Activated naive CD4-positive, alpha-beta T cell treated with anti-CD3 and anti-CD28 coated beads for 36 hours (primary cell): ENCODE measurements at regions of chr20 and their contacts with region 1.

Region 1: DNA sequence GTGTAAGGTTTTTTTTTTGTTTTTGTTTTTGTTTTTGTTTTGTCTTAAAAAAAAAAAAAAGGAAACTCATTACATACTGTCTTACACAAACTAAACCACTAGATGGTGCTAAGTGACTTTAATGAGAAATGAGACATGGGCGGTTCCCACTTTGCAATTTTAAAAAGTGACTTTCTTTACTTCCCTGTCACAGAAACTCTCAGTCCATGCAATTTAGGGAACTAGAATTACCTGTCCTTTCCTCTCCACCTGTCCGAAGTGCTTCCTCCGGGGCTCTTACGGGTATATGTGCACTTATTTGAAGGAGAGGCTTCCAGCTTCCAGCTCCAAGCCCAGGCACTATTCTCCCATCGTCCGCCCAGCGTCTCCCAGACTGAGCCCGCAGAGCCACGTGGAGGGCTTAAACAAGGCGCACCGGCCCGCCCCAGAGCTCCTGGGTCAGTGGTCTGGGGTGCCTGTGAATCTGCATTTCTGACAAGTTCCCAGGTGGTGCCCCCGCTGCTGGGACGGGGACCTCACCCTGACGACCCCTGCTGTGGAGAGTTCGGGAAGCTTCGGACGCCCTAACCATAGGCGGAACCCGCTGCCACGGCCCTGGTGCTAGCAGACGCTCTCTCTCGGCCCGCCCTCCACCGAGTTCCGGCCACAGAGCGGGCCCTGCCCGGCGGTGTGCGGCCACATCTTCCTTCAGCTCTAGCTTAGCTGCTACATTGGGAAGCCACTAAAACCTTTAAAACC is 26.1 kb downstream of the BFSP1 start:
- DNase-seq: no peak
- H3K4me3 Mint-ChIP-seq: peak overlapping the region; percentile 73
- H3K27ac Mint-ChIP-seq: peak overlapping the region; percentile 18
- H3K4me1 Mint-ChIP-seq: peaks cover 19% of the 10 kb centered on the region
- H3K27me3 Mint-ChIP-seq: no peaks in the 10 kb centered on the region

Region 2: GRCh38 chr20:17569616-17570346 is 64.7 kb after region 1 on chr20 and contains the start of gene DSTN:
- CTCF ChIA-PET with region 1: interaction called, 17 read pairs
- intact Hi-C with region 1: loop called (anchors 2 kb)
- DNase-seq: peak; percentile 84
- H3K4me3 Mint-ChIP-seq: peak within 1 kb of the TSS; percentile 91
- H3K27ac Mint-ChIP-seq: peak within 1 kb of the TSS; percentile 78
- H3K4me1 Mint-ChIP-seq: peaks cover 25% of the 10 kb centered on the region
- H3K27me3 Mint-ChIP-seq: no peaks in the 10 kb centered on the region
- total RNA-seq, gene DSTN: 68.9 to 69.7 TPM

Region 3: DNA sequence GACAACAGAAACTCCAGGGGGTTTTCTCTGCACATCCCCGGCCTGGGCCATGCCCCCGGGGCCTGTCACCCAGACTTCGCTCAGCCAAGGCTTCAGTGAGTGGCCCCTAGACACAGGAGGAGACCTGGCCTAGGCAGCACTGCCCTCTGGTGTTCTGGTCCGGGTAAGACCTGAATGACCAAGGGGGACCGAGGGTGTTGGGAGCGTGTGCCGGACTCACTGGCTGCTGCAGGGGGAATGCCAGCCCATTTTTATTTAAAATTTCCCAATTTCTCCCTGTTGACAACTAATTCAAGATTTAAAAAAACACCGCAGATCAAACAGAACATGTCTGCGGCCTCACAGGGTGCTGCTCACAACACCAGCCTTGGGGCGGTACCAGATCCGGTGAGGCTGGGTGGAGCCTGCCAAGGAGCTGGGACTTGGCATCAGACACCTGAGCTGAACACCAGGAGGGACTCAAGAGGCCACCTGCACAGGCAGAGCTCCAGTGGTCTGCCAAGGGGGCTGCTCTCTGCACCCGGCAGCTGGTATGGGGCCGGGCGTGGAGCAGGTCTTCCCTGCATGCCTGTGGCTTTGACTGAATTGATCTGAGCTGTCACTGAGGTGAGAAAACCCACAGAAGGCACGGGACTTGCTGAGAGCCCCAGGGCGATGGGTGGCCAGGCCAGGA is 112.6 kb after region 1 on chr20:
- CTCF ChIA-PET with region 1: interaction called, 13 read pairs
- intact Hi-C with region 1: loop called (anchors 1 kb)
- DNase-seq: peak; percentile 66
- H3K4me3 Mint-ChIP-seq: no peak overlapping the region
- H3K27ac Mint-ChIP-seq: no peak overlapping the region
- H3K4me1 Mint-ChIP-seq: peaks cover 3% of the 10 kb centered on the region
- H3K27me3 Mint-ChIP-seq: no peaks in the 10 kb centered on the region

Region 4: DNA sequence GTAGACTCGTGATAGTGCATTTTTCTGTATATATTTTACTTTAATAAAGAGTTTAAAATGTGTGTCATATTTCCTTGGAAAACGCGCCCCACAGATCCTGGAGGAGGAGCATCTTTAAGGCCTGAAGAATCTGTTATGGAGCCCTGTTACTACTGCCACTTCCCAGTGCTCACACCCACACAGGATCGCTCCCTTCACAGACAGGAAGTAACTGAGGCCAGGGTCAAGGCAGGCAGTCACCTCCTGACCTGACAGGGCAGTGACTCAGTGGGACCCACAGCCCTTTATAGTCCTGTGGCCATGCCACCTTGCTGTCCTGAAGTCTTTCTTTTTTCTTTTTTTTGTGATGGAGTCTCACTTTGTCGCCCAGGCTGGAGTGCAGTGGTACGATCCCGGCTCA is 168.0 kb after region 1 on chr20:
- CTCF ChIA-PET with region 1: no interaction called
- intact Hi-C with region 1: no loop called
- DNase-seq: no peak
- H3K4me3 Mint-ChIP-seq: no peak overlapping the region
- H3K27ac Mint-ChIP-seq: no peak overlapping the region
- H3K4me1 Mint-ChIP-seq: peaks cover 6% of the 10 kb centered on the region
- H3K27me3 Mint-ChIP-seq: no peaks in the 10 kb centered on the region

Region 5: GRCh38 chr20:17898548-17898994 is 393.5 kb after region 1 on chr20:
- CTCF ChIA-PET with region 1: interaction called, 17 read pairs
- intact Hi-C with region 1: loop called (anchors 1 kb)
- DNase-seq: peak; percentile 78
- H3K4me3 Mint-ChIP-seq: no peak overlapping the region
- H3K27ac Mint-ChIP-seq: no peak overlapping the region
- H3K4me1 Mint-ChIP-seq: peaks cover 12% of the 10 kb centered on the region
- H3K27me3 Mint-ChIP-seq: peaks cover 25% of the 10 kb centered on the region

Region 6: DNA sequence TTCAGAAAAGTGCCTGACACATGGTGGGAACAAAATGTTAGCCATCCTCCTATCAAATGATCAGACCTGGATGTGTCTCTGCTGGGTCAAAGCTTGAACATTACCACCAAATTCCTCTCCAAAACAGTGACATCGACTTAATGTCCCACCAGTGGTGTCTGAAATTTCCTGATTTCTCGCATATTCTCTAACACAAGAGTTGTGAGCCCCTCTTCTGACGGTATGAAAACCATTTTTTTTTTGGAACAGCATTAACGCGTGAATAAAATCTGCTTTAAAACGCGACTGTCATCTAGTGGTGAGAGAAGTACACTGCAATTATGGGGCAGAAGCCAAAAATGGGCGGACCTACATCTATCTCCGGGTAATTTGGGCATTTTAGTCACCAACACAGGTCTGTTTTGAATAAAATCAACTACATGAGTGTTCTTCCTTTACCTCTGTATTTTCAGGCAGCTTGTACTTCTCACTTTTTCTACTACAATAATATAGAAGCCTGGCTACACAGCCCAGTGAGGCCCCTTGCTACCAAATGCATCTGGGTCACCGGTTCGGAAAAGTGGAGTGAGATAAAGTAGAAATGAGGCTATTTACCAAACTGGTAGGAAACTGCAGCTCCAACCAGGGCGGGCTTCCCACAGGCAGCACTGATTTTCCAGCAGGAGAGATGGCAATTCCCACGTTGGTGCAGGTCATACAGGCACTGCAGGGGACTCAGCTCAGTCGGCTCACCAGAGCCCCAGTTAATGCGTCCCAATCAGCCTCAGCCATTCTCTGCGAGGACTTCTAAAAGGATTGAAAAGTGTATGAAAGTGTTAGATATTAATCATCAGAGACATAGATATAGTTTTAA is 491.1 kb after region 1 on chr20:
- CTCF ChIA-PET with region 1: interaction called, 9 read pairs
- intact Hi-C with region 1: loop called (anchors 1 kb)
- DNase-seq: peak; percentile 59
- H3K4me3 Mint-ChIP-seq: no peak overlapping the region
- H3K27ac Mint-ChIP-seq: no peak overlapping the region
- H3K4me1 Mint-ChIP-seq: peaks cover 21% of the 10 kb centered on the region
- H3K27me3 Mint-ChIP-seq: peaks cover 12% of the 10 kb centered on the region